Common myeloid progenitor, CD34-positive (primary cell): ENCODE measurements at regions of chr3 and their contacts with region 1.

Region 1: GRCh38 chr3:170021083-170021482 is 16.7 kb upstream of the GPR160 start:
- DNase-seq: peak; percentile 11 to 50 (median 47)
- H3K4me3 ChIP-seq: no peak overlapping the region
- H3K27ac ChIP-seq: no peak overlapping the region
- H3K4me1 ChIP-seq: no peaks in the 10 kb centered on the region
- H3K27me3 ChIP-seq: no peaks in the 10 kb centered on the region

Region 2: DNA sequence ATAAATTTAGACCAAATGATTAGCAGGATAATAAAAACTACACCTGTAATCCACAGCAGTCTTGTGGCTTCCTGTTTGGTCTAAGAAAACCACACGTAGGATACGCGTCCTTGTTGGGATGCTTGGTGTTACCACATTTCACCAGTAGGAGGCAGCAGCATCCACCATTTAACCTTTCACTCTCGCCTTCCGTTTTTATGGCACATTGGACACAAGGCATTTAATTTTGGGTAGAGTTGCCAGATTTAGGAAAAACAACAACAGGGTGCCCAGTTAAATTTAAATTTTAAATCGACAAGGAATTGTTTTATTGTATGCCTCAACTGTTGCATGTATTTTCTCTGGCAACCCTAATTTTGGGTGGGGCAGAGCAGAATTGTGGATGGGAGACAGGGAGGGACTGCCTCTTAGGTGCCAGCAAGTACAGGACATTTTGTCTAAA is 157.6 kb before region 1 on chr3:
- CTCF ChIA-PET with region 1: interaction called, 10 read pairs
- POLR2A ChIA-PET with region 1: no interaction called
- DNase-seq: peak; percentile 83 to 88 (median 85)
- H3K4me3 ChIP-seq: no peak overlapping the region
- H3K27ac ChIP-seq: no peak overlapping the region
- H3K4me1 ChIP-seq: peaks cover 2 to 13% (median 11%) of the 10 kb centered on the region in 4 experiments
- H3K27me3 ChIP-seq: peaks cover 0 to 9% (median 0%) of the 10 kb centered on the region in 5 experiments

Region 3: DNA sequence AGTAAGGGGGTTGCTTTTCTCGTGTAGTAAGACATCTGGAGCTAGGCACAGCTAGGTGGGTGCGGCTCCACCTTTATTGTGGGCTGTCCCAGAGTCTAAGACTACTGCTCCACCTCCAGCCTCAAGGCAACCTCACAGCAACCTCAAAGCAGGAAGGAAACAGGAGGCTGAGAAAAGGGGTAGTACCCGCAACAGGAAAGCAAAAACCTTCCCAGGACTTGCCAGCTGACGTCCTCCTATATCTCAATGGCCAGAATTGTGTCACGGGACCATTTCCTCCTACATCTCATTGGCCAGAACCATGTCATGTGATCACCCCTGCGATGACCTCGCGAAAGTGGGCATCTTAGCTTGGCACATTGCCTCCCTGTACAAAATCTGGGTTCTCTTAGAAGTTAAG is 12.4 kb after region 1 on chr3:
- CTCF ChIA-PET with region 1: interaction called, 11 read pairs
- POLR2A ChIA-PET with region 1: no interaction called
- DNase-seq: peak; percentile 76 to 90 (median 87)
- H3K4me3 ChIP-seq: peak overlapping the region in 2 of 7 experiments; percentile 20 to 22
- H3K27ac ChIP-seq: no peak overlapping the region
- H3K4me1 ChIP-seq: peaks cover 9 to 22% (median 19%) of the 10 kb centered on the region in 4 experiments
- H3K27me3 ChIP-seq: peaks cover 0 to 2% (median 0%) of the 10 kb centered on the region in 5 experiments